ENCODE measurements at regions of chr4 and their contacts with region 1.

Region 1: DNA sequence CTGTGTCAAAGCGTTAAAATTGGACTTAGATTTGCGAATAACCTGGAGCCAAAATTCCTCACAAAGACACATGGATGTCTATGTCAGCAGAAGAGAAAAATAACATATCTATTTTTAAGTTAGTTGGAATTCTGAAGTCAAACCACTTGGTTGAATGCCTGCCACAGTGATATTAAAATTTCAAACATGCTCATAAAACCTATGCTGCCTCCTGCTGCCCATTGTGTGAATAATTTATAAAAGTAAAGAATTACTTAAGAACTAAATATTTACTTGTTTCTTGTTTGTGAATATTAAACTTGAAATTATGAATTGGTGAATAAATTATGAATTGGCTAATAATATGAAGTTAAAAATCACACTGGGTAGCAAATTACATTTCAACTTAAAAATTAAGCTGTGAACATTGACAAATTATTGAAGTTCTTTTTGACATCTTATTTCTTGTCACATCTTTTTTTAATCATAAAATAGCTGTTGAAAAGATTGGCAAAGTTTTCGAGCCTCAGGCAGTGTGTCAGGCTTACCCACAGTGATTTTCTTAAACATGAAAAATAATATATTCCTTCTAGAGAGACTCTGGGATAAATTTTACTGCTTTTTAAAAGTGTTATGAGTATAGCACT is 35.4 kb downstream of the FABP2 start:
- DNase-seq: peak in 3 of 5 donors; percentile 29 to 54 (median 45)
- ATAC-seq: peak; percentile 35 to 77 (median 62)
- H3K4me3 ChIP-seq: no peak overlapping the region
- H3K27ac ChIP-seq: peak overlapping the region in 9 of 12 donors; percentile 18 to 72 (median 50)
- H3K4me1 ChIP-seq: peaks cover 3 to 47% (median 20%) of the 10 kb centered on the region in 12 donors
- H3K27me3 ChIP-seq: no peaks in the 10 kb centered on the region
- CTCF ChIP-seq: peak; percentile 45 to 81 (median 70)
- POLR2A ChIP-seq: no peak

Region 2: GRCh38 chr4:118740869-118741268 is 545.6 kb before region 1 on chr4:
- intact Hi-C with region 1: loop called in 2 of 10 experiments (anchors 10 kb)
- DNase-seq: no peak
- ATAC-seq: no peak
- H3K4me3 ChIP-seq: peak overlapping the region in 7 of 12 donors; percentile 0 to 24 (median 9)
- H3K27ac ChIP-seq: peak overlapping the region; percentile 29 to 83 (median 64)
- H3K4me1 ChIP-seq: peaks cover 0 to 27% (median 14%) of the 10 kb centered on the region in 12 donors
- H3K27me3 ChIP-seq: no peaks in the 10 kb centered on the region
- CTCF ChIP-seq: peak; percentile 38 to 66 (median 50)
- POLR2A ChIP-seq: no peak

Region 3: GRCh38 chr4:118772081-118772766 is 514.3 kb before region 1 on chr4:
- intact Hi-C with region 1: loop called in 2 of 10 experiments (anchors 10 kb)
- DNase-seq: no peak
- ATAC-seq: peak; percentile 68 to 81 (median 74)
- H3K4me3 ChIP-seq: peak overlapping the region in 5 of 12 donors; percentile 11 to 38 (median 19)
- H3K27ac ChIP-seq: peak overlapping the region; percentile 1 to 87 (median 64)
- H3K4me1 ChIP-seq: peaks cover 4 to 85% (median 52%) of the 10 kb centered on the region in 12 donors
- H3K27me3 ChIP-seq: no peaks in the 10 kb centered on the region
- CTCF ChIP-seq: peak; percentile 46 to 76 (median 64)
- POLR2A ChIP-seq: no peak

Region 4: DNA sequence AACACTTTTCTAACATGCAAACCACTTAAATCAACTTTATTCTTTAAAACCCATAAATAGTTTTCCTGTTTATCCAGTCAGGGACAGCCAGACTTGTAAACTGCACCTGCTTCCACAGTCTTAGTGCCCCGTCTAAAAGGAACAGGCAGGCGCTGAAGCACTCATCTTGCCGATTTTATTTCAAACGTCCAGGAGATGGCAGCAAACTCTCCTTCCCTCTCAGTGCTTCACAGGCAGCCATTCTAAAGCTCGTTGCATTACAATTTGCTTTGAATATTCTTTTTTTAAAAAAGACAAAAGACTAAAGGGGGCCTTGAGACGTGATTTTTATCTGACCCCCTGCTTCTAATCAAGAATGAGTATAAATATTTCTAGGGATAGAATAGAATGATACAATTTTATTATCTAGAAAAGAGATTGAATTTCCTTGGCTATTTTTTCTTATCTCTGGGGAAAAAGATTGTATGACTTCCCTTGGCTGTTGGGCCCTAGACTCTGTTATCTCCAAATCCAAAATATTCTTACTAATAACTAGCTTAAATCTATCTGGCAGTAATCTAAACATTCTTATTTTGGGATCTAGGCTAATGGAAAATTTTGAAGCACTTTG is 244.4 kb before region 1 on chr4:
- intact Hi-C with region 1: loop called (anchors 5 to 10 kb)
- DNase-seq: peak in 3 of 5 donors; percentile 45 to 58 (median 53)
- ATAC-seq: peak; percentile 13 to 71 (median 66)
- H3K4me3 ChIP-seq: no peak overlapping the region
- H3K27ac ChIP-seq: peak overlapping the region in 10 of 12 donors; percentile 27 to 91 (median 70)
- H3K4me1 ChIP-seq: peaks cover 0 to 86% (median 59%) of the 10 kb centered on the region in 12 donors
- H3K27me3 ChIP-seq: no peaks in the 10 kb centered on the region
- CTCF ChIP-seq: peak; percentile 43 to 72 (median 64)
- POLR2A ChIP-seq: no peak

Region 5: GRCh38 chr4:119099227-119099801 is 187.2 kb before region 1 on chr4:
- intact Hi-C with region 1: loop called in 1 of 10 experiments (anchors 5 kb)
- DNase-seq: no peak
- ATAC-seq: peak in 3 of 4 donors; percentile 5 to 43 (median 12)
- H3K4me3 ChIP-seq: no peak overlapping the region
- H3K27ac ChIP-seq: peak overlapping the region in 4 of 12 donors; percentile 14 to 47 (median 36)
- H3K4me1 ChIP-seq: peaks cover 0 to 49% (median 32%) of the 10 kb centered on the region in 12 donors
- H3K27me3 ChIP-seq: no peaks in the 10 kb centered on the region
- CTCF ChIP-seq: no peak
- POLR2A ChIP-seq: no peak

Region 6: DNA sequence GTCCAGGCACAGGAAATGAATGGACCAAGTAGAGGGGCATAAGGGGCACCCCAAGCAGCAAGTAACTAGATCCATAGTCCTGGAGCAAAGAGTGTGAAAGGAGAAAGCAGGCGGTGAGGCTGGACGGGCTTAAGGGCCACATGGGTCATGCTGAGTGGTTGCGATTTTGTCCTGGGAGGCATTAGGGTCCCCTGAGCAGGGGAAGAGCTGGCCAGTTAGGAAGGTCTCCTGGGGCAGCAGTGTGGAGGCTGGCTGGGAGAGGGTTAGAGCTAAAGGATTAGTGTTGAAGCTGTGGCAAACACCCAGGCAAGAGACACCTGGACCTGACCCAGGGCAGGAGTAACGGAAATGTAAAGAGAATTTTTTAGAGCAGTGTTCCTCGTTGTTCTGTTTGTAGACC is 124.3 kb before region 1 on chr4:
- intact Hi-C with region 1: loop called in 2 of 10 experiments (anchors 10 kb)
- DNase-seq: no peak
- ATAC-seq: peak in 3 of 4 donors; percentile 12 to 47 (median 43)
- H3K4me3 ChIP-seq: no peak overlapping the region
- H3K27ac ChIP-seq: peak overlapping the region in 3 of 12 donors; percentile 15 to 26 (median 25)
- H3K4me1 ChIP-seq: peaks cover 0 to 49% (median 8%) of the 10 kb centered on the region in 12 donors
- H3K27me3 ChIP-seq: no peaks in the 10 kb centered on the region
- CTCF ChIP-seq: no peak
- POLR2A ChIP-seq: no peak

Region 7: GRCh38 chr4:119218093-119218492 is 68.4 kb before region 1 on chr4:
- intact Hi-C with region 1: loop called in 3 of 10 experiments (anchors 5 to 10 kb)
- DNase-seq: no peak
- ATAC-seq: no peak
- H3K4me3 ChIP-seq: no peak overlapping the region
- H3K27ac ChIP-seq: no peak overlapping the region
- H3K4me1 ChIP-seq: peaks cover 0 to 38% (median 12%) of the 10 kb centered on the region in 12 donors
- H3K27me3 ChIP-seq: no peaks in the 10 kb centered on the region
- CTCF ChIP-seq: no peak
- POLR2A ChIP-seq: no peak

Region 8: GRCh38 chr4:120844528-120844921 is 1558.0 kb after region 1 on chr4:
- intact Hi-C with region 1: no loop called
- DNase-seq: no peak
- ATAC-seq: no peak
- H3K4me3 ChIP-seq: no peak overlapping the region
- H3K27ac ChIP-seq: no peak overlapping the region
- H3K4me1 ChIP-seq: peaks cover 0 to 6% (median 0%) of the 10 kb centered on the region in 12 donors
- H3K27me3 ChIP-seq: no peaks in the 10 kb centered on the region
- CTCF ChIP-seq: no peak
- POLR2A ChIP-seq: no peak